K562 (cell line): ENCODE measurements at regions of chr5 and their contacts with region 1.

Region 1: GRCh38 chr5:150846654-150847333 is 473 bp downstream of the IRGM start:
- DNase-seq: peak; percentile 58 to 84 (median 62)
- ATAC-seq: peak; percentile 97
- H3K4me3 ChIP-seq: no peak overlapping the region
- H3K27ac ChIP-seq: 0 out of 3 replicates have a peak overlapping the region, but pooled peaks have one; percentile 12
- H3K4me1 ChIP-seq: peaks cover 0 to 5% of the 10 kb centered on the region in 2 experiments; a peak in 3 of 5 replicates
- H3K27me3 ChIP-seq: peaks cover 0 to 14% of the 10 kb centered on the region in 2 experiments; a peak in 3 of 5 replicates
- CTCF ChIP-seq: peak; percentile 71 to 96 (median 84)
- EP300 ChIP-seq: no peak
- POLR2A ChIP-seq: no peak
- RAD21 ChIP-seq: peak; percentile 90 to 96

Region 2: GRCh38 chr5:150436141-150436680 is 410.6 kb before region 1 on chr5:
- CTCF ChIA-PET with region 1: no interaction called
- POLR2A ChIA-PET with region 1: no interaction called
- in situ Hi-C with region 1: no loop called
- intact Hi-C with region 1: loop called (anchors 5 kb)
- DNase-seq: peak; percentile 88 to 91 (median 90)
- ATAC-seq: peak; percentile 95
- H3K4me3 ChIP-seq: no peak overlapping the region
- H3K27ac ChIP-seq: no peak overlapping the region
- H3K4me1 ChIP-seq: peaks cover 0 to 6% of the 10 kb centered on the region in 2 experiments; a peak in 3 of 5 replicates
- H3K27me3 ChIP-seq: peaks cover 0 to 6% of the 10 kb centered on the region in 2 experiments; a peak in 3 of 5 replicates
- CTCF ChIP-seq: peak; percentile 86 to 90 (median 89)
- EP300 ChIP-seq: no peak
- POLR2A ChIP-seq: no peak
- RAD21 ChIP-seq: peak; percentile 83 to 91

Region 3: DNA sequence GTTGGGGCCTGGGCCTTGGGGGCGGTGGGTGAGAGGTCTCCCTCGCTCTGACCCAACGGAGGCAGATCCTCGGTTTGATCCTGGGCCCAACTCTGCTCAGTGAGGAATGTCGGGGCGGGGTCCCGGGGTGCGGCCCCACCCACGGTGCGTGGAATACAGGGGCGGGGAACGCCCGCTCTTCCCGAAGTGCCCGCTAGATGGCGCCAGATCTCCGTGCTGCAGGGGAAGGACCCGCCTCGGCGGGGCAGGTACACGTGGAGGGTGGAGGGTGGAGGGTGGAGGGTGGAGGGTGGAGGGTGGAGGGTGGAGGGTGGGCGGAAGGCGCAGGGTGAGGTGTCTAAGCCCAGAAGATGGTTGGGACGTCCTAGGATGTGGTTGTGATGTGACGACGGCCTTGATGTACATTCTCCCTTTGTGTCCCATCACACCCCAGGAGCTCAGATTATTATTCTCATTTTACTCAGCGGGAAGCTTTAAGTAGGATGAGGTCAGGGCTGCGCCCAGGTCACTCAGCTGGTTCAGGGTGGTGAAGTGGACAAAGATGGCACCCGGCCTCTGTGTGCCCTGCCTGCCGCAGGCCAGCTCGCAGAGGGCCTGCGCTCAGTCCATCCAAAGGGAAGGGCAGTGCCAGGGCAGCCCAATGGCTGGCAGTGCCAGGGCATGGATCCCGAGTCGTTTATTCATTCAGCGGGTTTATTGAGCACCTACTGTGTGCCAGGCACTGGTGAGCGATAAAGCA is 387.8 kb before region 1 on chr5:
- CTCF ChIA-PET with region 1: no interaction called
- POLR2A ChIA-PET with region 1: no interaction called
- in situ Hi-C with region 1: loop called (anchors 10 kb)
- intact Hi-C with region 1: loop called (anchors 5 kb)
- DNase-seq: peak; percentile 88 to 95 (median 92)
- ATAC-seq: peak; percentile 94
- H3K4me3 ChIP-seq: no peak overlapping the region
- H3K27ac ChIP-seq: no peak overlapping the region
- H3K4me1 ChIP-seq: peaks cover 23 to 39% of the 10 kb centered on the region in 2 experiments; a peak in 4 of 5 replicates
- H3K27me3 ChIP-seq: no peaks in the 10 kb centered on the region
- CTCF ChIP-seq: peak; percentile 68 to 92 (median 85)
- EP300 ChIP-seq: no peak
- POLR2A ChIP-seq: no peak
- RAD21 ChIP-seq: peak; percentile 67 to 80

Region 4: DNA sequence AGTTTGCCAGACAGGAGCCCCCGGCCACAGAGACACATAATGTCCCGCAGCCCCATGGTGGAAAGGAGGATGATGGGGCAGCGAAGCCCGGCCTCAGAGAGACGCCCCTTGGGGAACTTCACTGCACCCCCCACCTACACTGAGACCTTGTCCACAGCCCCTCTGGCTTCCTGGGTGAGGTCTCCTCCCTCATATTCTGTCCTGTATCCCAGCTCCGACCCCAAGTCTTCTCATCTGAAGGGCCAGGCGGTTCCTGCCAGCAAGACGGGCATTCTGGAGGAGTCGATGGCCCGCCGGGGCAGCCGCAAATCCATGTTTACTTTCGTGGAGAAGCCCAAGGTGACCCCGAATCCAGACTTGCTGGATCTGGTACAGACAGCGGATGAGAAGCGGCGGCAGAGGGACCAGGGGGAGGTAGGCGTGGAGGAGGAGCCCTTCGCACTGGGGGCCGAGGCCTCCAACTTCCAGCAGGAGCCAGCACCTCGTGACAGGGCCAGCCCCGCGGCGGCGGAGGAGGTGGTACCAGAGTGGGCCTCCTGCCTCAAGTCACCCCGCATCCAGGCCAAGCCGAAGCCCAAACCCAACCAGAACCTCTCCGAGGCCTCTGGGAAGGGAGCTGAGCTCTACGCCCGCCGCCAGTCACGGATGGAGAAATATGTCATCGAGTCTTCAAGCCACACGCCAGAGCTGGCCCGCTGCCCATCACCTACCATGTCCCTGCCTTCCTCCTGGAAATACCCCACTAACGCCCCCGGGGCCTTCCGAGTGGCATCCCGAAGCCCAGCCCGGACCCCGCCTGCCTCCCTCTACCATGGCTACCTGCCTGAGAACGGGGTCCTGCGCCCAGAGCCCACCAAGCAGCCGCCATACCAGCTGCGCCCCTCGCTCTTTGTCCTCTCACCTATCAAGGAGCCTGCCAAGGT is 197.4 kb before region 1 on chr5:
- CTCF ChIA-PET with region 1: no interaction called
- POLR2A ChIA-PET with region 1: no interaction called
- in situ Hi-C with region 1: no loop called
- intact Hi-C with region 1: no loop called
- DNase-seq: no peak
- ATAC-seq: no peak
- H3K4me3 ChIP-seq: no peak overlapping the region
- H3K27ac ChIP-seq: no peak overlapping the region
- H3K4me1 ChIP-seq: peaks cover 0 to 23% of the 10 kb centered on the region in 2 experiments; a peak in 2 of 5 replicates
- H3K27me3 ChIP-seq: peaks cover 28 to 70% of the 10 kb centered on the region in 2 experiments
- CTCF ChIP-seq: no peak
- EP300 ChIP-seq: no peak
- POLR2A ChIP-seq: no peak
- RAD21 ChIP-seq: no peak

Region 5: DNA sequence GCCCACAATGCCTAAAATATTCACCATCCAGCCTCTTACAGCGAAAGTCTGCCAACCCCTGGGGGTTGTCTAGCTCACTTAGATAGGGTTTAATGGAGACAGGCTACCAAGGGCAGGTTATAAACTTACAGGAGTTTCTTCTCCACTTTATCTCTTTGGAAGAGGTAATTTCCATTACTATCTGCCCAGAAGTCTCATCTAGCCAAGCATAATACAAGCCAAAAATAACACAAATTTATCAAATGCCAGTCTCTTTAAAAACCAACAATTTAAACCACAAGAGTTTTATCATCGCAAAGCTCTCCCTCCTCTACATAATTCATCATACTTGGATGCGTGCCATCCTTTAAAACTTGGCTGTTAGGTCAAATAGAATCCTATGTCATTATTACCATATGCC is 152.2 kb before region 1 on chr5:
- CTCF ChIA-PET with region 1: no interaction called
- POLR2A ChIA-PET with region 1: no interaction called
- in situ Hi-C with region 1: no loop called
- intact Hi-C with region 1: loop called (anchors 10 kb)
- DNase-seq: no peak
- ATAC-seq: no peak
- H3K4me3 ChIP-seq: no peak overlapping the region
- H3K27ac ChIP-seq: no peak overlapping the region
- H3K4me1 ChIP-seq: peaks cover 0 to 4% of the 10 kb centered on the region in 2 experiments; a peak in 1 of 5 replicates
- H3K27me3 ChIP-seq: no peaks in the 10 kb centered on the region
- CTCF ChIP-seq: no peak
- EP300 ChIP-seq: no peak
- POLR2A ChIP-seq: no peak
- RAD21 ChIP-seq: no peak

Region 6: DNA sequence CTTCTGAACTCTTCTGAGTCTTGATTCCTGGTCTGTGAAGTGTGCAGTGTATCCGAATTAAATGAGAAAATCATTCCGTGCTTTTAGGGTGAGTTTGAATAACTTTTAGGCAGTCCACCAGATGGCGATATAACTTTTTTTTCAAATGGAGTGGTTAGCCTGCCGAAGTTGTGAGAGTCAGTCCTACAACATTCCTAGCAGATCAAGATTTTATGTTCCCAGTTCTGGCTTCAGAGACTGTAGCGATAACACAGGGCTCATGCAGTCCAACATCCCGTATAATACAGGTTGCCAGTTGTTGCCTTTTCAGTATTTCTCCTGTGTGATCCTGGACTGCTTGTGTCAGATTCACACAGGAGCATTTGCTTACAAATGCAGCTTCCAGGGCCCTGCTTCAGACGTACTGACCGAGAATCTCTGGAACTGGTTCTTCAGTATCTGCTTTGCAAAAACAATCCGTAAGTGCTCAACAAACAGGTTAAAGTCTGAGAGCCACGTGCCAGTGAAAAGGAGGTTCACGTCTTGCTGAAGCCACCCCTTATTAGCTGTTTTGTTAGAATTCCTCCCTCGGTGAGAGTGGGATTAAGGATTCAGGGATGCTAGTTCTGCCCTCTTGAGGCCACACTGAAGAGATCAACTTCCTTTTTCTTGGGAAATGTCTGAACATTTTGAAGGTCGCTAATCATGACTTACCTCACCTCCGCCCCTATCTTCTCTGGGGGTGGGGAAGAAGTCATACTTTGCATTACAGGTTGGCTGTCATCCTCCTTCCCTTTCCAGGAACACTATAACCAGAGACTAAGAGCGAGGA is 45.5 kb before region 1 on chr5:
- CTCF ChIA-PET with region 1: interaction called, 4 read pairs
- POLR2A ChIA-PET with region 1: interaction called, 3 read pairs
- in situ Hi-C with region 1: no loop called
- intact Hi-C with region 1: loop called (anchors 1 kb)
- DNase-seq: peak; percentile 41 to 72 (median 48)
- ATAC-seq: peak; percentile 93
- H3K4me3 ChIP-seq: peak overlapping the region; percentile 30
- H3K27ac ChIP-seq: peak overlapping the region; percentile 53; the same call in 2 of the 3 replicates
- H3K4me1 ChIP-seq: peaks cover 0 to 8% of the 10 kb centered on the region in 2 experiments; a peak in 2 of 5 replicates
- H3K27me3 ChIP-seq: no peaks in the 10 kb centered on the region
- CTCF ChIP-seq: peak; percentile 51 to 71 (median 66)
- EP300 ChIP-seq: no peak
- POLR2A ChIP-seq: no peak
- RAD21 ChIP-seq: peak; percentile 17 to 64; a peak in 3 of 4 replicates